ENCODE measurements at regions of chr1 and their contacts with region 1.

Region 1: DNA sequence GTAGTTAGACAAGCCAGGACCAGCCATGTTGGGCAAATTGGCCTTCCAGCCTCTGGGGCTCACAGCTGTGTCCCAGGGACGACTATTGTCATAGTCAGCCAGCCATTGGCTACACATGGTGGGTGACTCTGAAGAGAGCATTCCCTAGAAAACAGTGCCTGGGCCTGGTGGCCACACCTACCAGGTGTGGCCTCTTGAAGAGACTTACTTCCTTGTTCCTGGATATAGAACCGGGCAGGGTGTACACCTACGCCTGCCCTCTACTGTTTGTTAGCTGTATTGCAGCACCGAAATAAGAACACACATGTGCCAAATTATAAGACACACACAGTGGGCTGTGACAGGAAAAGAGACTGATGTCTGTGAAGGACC is 134.6 kb upstream of the ARHGEF16 start:
- DNase-seq: no peak

Region 2: DNA sequence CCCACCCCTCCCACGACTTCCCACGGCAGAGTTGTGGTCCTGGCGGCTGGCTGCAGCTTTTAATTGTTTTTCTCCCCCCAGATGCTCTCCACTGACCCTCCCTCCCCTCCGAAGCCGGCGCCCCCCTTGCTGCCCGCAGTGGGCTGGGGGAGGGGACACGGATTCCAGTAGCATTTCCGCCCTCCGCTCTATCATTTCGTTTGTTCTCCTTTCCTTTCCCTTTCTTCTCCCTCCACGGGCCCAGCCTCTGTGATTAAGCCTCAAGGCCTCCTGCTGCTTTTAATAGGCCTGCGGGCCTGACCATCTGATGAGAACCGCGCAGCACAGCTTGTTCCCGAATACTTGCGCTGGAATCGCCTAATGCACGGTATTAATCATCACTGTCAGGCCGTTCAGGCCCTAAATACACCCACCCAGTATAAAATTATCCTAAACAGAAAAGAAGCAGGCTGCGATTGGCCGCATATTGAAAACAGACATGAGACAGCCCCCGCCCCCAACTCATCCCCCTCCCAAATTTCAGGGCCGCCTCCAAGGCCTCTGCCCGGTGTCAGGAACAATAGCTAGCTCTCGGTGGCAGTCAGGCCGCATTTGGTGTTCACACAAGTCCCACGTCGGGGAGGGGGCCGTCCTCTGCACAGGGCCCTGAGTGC is 32.6 kb after region 1 on chr1:
- intact Hi-C with region 1: loop called in 1 of 2 experiments (anchors 5 kb)
- DNase-seq: peak; percentile 91

Measured in posterior vena cava (tissue), 2 donors.